Activated naive CD4-positive, alpha-beta T cell treated with anti-CD3 and anti-CD28 coated beads for 36 hours (primary cell): ENCODE measurements at regions of chr18 and their contacts with region 1.

Region 1: GRCh38 chr18:58661423-58661822 is 9.8 kb upstream of the MALT1 start:
- DNase-seq: no peak
- H3K4me3 Mint-ChIP-seq: no peak overlapping the region
- H3K27ac Mint-ChIP-seq: no peak overlapping the region
- H3K4me1 Mint-ChIP-seq: peaks cover 49% of the 10 kb centered on the region
- H3K27me3 Mint-ChIP-seq: no peaks in the 10 kb centered on the region

Region 2: GRCh38 chr18:58624011-58624410 is 37.4 kb before region 1 on chr18:
- CTCF ChIA-PET with region 1: no interaction called
- intact Hi-C with region 1: loop called (anchors 2 kb)
- DNase-seq: no peak
- H3K4me3 Mint-ChIP-seq: no peak overlapping the region
- H3K27ac Mint-ChIP-seq: no peak overlapping the region
- H3K4me1 Mint-ChIP-seq: peaks cover 25% of the 10 kb centered on the region
- H3K27me3 Mint-ChIP-seq: no peaks in the 10 kb centered on the region

Region 3: DNA sequence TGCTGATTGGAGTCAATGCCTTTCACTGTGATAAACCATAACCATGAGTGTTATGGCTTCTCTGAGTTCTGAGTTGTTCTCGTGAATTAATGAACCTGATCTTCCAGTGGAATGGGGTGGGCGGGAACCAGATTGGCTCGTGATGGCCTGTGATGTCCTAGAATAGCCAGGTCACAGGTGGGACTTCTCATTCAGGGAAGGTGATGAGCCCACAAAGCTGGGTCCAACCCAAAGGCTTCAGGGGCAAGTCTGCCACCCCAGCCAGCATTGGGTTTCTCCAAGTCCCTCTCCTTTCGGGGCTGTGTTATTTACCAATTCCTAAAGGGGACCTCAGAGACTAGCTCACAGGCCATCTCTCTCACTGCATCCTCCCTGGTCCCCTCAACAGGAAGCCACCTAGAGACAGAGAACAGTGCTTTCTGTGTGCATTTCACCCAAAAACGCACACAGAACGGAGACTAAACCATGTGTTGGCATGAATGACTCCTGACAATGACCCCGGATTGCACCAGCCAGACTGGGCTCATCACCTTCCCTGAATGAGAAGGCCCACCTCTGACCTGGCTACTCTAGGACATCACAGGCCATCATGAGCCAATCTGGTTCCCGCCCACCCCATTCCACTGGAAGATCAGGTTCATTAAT is 95.3 kb after region 1 on chr18:
- CTCF ChIA-PET with region 1: no interaction called
- intact Hi-C with region 1: no loop called
- DNase-seq: no peak
- H3K4me3 Mint-ChIP-seq: no peak overlapping the region
- H3K27ac Mint-ChIP-seq: no peak overlapping the region
- H3K4me1 Mint-ChIP-seq: peaks cover 33% of the 10 kb centered on the region
- H3K27me3 Mint-ChIP-seq: peaks cover 3% of the 10 kb centered on the region

Region 4: DNA sequence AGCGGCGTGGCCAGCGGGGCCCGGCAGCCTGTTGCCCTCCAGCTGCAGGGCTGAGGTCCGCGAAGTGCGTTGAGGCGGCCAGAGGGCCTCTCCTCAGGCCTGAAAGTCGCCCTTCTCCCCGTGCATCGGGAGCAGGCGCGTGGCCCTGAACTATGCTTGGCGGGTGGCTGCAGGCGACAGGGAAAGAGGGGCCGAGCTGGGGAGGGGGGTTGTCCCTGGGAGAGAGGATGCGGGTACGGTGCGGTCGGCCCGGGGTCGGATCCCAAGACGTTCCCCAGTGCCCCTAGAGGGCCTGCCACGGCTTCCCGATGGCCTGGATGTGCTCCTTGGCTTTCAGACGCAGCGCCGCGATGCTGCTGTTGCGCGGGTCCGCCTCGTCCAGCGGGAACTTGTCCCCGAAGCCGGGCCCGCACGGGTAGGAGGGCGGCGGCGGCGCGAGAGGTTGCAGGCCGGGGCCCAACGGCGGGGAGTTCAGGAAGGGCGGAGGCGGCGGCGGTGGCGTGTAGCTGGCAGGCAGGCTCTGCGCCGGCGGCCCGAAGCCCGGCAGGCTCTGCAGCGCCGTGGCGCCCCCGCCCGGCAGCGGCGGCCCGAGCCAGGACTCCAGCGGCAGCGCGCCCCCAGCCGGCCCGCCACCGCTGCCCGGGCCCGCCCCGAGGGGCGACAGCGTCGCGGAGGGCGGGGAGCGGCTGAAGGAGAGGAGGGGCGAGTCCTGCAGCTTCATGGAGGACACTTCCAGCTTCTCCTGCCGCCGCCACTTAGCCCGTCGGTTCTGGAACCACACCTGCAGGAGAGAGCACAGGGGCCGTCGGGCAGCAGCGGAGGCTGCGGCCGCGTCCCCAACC is 607.5 kb after region 1 on chr18:
- CTCF ChIA-PET with region 1: no interaction called
- intact Hi-C with region 1: no loop called
- DNase-seq: peak; percentile 68
- H3K4me3 Mint-ChIP-seq: peak overlapping the region; percentile 39
- H3K27ac Mint-ChIP-seq: no peak overlapping the region
- H3K4me1 Mint-ChIP-seq: peaks cover 29% of the 10 kb centered on the region
- H3K27me3 Mint-ChIP-seq: peaks cover 81% of the 10 kb centered on the region